ENCODE measurements at regions of chr1 and their contacts with region 1.

Region 1: GRCh38 chr1:6613361-6614018 is at the start of gene PHF13:
- DNase-seq: peak; percentile 100
- H3K4me3 Mint-ChIP-seq: peak within 1 kb of the TSS; percentile 95
- H3K27ac Mint-ChIP-seq: peak within 1 kb of the TSS; percentile 85
- H3K4me1 Mint-ChIP-seq: peaks cover 21% of the 10 kb centered on the region
- H3K27me3 Mint-ChIP-seq: peaks cover 2% of the 10 kb centered on the region
- total RNA-seq, gene PHF13: 19.1 and 20.1 TPM in 2 replicates

Region 2: GRCh38 chr1:6624710-6625583 is 11.5 kb after region 1 on chr1 and contains the start of gene THAP3:
- intact Hi-C with region 1: loop called (anchors 1 kb)
- DNase-seq: peak; percentile 95
- H3K4me3 Mint-ChIP-seq: peak within 1 kb of the TSS; percentile 95
- H3K27ac Mint-ChIP-seq: peak within 1 kb of the TSS; percentile 90
- H3K4me1 Mint-ChIP-seq: peaks cover 28% of the 10 kb centered on the region
- H3K27me3 Mint-ChIP-seq: no peaks in the 10 kb centered on the region
- total RNA-seq, gene THAP3: 19.5 and 24.6 TPM in 2 replicates

Region 3: GRCh38 chr1:6701437-6702153 is 88.1 kb after region 1 on chr1 and contains the start of gene DNAJC11:
- intact Hi-C with region 1: loop called (anchors 5 kb)
- DNase-seq: peak; percentile 99
- H3K4me3 Mint-ChIP-seq: peak within 1 kb of the TSS; percentile 91
- H3K27ac Mint-ChIP-seq: peak within 1 kb of the TSS; percentile 96
- H3K4me1 Mint-ChIP-seq: peaks cover 25% of the 10 kb centered on the region
- H3K27me3 Mint-ChIP-seq: no peaks in the 10 kb centered on the region
- total RNA-seq, gene DNAJC11: 87.6 and 92.5 TPM in 2 replicates